CD4-positive, alpha-beta memory T cell (primary cell): ENCODE measurements at regions of chr9 and their contacts with region 1.

Region 1: GRCh38 chr9:124861342-124862229 is at the starts of genes ARPC5L and RPL35:
- DNase-seq: peak; percentile 95 to 96 (median 95)
- H3K4me3 ChIP-seq: peak within 1 kb of the TSS; percentile 78 to 84
- H3K4me3 Mint-ChIP-seq: peak within 1 kb of the TSS; percentile 91 to 100 (median 96)
- H3K27ac ChIP-seq: peak within 1 kb of the TSS; percentile 95
- H3K27ac Mint-ChIP-seq: peak within 1 kb of the TSS; percentile 92 to 99 (median 98)
- H3K4me1 ChIP-seq: peaks cover 26% of the 10 kb centered on the region
- H3K4me1 Mint-ChIP-seq: peaks cover 20 to 41% (median 29%) of the 10 kb centered on the region in 4 donors
- H3K27me3 ChIP-seq: no peaks in the 10 kb centered on the region
- H3K27me3 Mint-ChIP-seq: no peaks in the 10 kb centered on the region
- total RNA-seq, gene ARPC5L: 26.8 to 31.4 TPM
- total RNA-seq, gene RPL35: 1,702 to 1,766 TPM

Region 2: GRCh38 chr9:124879226-124879625 is 17.6 kb after region 1 on chr9:
- CTCF ChIA-PET with region 1: interaction called, 56 read pairs
- POLR2A ChIA-PET with region 1: interaction called, 74 read pairs
- intact Hi-C with region 1: no loop called
- DNase-seq: no peak
- H3K4me3 ChIP-seq: no peak overlapping the region
- H3K4me3 Mint-ChIP-seq: no peak overlapping the region
- H3K27ac ChIP-seq: no peak overlapping the region
- H3K27ac Mint-ChIP-seq: peak overlapping the region in 4 of 7 donors; percentile 56 to 62 (median 60)
- H3K4me1 ChIP-seq: peaks cover 10% of the 10 kb centered on the region
- H3K4me1 Mint-ChIP-seq: peaks cover 6 to 15% (median 8%) of the 10 kb centered on the region in 4 donors
- H3K27me3 ChIP-seq: no peaks in the 10 kb centered on the region
- H3K27me3 Mint-ChIP-seq: no peaks in the 10 kb centered on the region

Region 3: GRCh38 chr9:125261501-125262293 is 400.1 kb after region 1 on chr9 and contains the start of gene GAPVD1:
- CTCF ChIA-PET with region 1: no interaction called
- POLR2A ChIA-PET with region 1: interaction called, 5 read pairs
- intact Hi-C with region 1: loop called (anchors 1 kb)
- DNase-seq: peak; percentile 86 to 91 (median 87)
- H3K4me3 ChIP-seq: peak within 1 kb of the TSS; percentile 72 to 94
- H3K4me3 Mint-ChIP-seq: peak within 1 kb of the TSS; percentile 94 to 98 (median 97)
- H3K27ac ChIP-seq: peak within 1 kb of the TSS; percentile 81
- H3K27ac Mint-ChIP-seq: peak within 1 kb of the TSS; percentile 87 to 98 (median 97)
- H3K4me1 ChIP-seq: peaks cover 33% of the 10 kb centered on the region
- H3K4me1 Mint-ChIP-seq: peaks cover 28 to 53% (median 40%) of the 10 kb centered on the region in 4 donors
- H3K27me3 ChIP-seq: no peaks in the 10 kb centered on the region
- H3K27me3 Mint-ChIP-seq: no peaks in the 10 kb centered on the region
- total RNA-seq, gene GAPVD1: 67.8 to 76.4 TPM